ENCODE measurements at regions of chr2 and their contacts with region 1.

Region 1: DNA sequence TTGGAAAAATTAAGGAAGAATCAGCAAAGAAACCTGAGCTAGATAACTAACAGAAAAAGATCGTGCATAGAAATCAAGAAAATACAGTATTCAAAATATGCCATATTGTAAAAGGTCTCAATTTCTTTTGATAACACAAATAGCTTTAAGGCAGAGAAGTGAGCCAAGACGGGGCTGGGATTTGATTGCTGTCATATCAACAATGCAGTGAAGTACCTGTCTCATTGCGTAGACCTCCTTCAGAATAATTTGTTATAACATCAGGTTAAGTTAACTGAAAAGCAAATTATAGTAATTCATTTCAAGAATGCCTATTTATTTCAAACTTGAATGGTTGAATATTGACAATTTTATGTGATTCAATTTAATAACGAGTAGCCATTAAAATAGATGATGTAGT is 453.8 kb upstream of the MAP2 start:
- DNase-seq: no peak
- H3K4me3 ChIP-seq: no peak overlapping the region
- H3K27ac ChIP-seq: no peak overlapping the region
- H3K4me1 ChIP-seq: no peaks in the 10 kb centered on the region
- CTCF ChIP-seq: no peak

Region 2: GRCh38 chr2:209805351-209805750 is 835.3 kb after region 1 on chr2:
- CTCF ChIA-PET with region 1: no interaction called
- POLR2A ChIA-PET with region 1: interaction called, 10 read pairs
- intact Hi-C with region 1: no loop called
- DNase-seq: no peak
- H3K4me3 ChIP-seq: no peak overlapping the region
- H3K27ac ChIP-seq: no peak overlapping the region
- H3K4me1 ChIP-seq: no peaks in the 10 kb centered on the region
- CTCF ChIP-seq: no peak

Measured in OCI-LY7 (cell line).